SK-N-SH (cell line): ENCODE measurements at regions of chr2 and their contacts with region 1.

Region 1: DNA sequence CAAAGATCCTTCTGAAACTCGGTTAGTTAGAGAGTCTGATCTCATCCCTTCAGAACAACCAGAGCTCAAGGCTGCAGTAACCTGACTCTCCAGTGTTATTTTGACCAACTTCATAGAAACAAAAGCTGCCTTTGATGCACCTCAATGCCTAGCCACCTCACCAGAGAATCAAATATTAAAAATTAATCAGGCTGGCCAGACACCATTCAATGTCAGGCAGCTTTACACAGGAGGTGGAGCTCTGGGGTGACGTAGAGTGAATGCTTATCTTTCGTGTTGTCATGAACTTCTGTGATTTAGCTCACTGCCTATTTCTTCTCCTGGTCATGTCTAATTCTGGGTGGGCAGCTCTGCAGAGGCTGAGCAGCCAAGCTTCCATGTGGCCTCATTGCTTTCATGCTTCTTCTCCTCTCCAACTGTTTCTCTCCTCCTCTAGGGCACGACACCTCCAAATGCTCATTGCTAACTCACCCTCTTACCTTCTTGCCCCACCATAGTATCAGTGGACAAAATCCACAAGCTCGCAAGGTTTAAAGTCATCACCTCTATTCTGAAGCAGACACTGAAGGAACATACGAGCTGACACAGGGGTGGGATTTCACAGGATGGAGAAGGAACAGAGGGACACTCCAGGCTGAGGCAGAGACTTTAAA is 39.4 kb downstream of the AAK1 start:
- DNase-seq: no peak
- H3K4me3 ChIP-seq: no peak overlapping the region
- H3K27ac ChIP-seq: no peak overlapping the region
- H3K4me1 ChIP-seq: peaks cover 7 to 15% of the 10 kb centered on the region in 2 experiments
- H3K27me3 ChIP-seq: no peaks in the 10 kb centered on the region
- CTCF ChIP-seq: no peak
- EP300 ChIP-seq: no peak
- RAD21 ChIP-seq: no peak

Region 2: DNA sequence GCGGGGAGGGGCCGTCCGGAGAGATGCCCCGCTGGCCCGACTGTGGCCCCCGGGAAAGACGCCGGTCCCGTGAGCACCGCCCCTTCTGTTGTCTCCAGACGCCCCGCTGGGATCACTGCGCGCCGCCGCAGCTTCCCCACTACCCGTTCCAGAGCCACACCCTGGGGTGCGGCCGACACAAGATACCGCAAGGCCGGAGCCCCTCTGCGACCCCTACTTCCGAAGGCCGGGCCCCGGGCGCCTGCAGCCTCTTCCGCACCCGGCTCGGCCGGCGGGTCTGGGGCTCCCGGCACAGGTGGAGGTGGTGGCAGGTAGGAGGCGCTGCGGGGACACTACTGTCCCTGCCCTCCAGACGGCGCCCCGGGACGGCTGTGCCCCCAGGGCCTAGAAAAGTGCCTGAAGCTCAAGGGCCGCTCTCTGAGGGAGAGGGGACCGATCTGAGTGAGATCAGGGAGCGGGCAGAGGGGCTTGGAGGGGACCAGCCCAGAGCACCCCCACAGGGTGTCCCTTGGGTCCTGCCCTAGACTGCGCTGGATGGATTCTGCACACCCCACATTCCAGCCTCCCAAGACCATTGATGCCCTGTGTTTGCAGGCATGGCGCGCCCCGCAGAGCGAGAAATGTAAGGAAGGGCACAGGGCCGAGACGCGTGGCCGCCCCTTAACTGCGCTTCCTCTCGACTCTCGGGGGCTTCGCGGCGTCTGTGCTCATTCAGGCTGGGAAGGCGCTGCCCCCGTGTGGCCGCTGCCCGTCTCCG is 297.2 kb before region 1 on chr2:
- CTCF ChIA-PET with region 1: no interaction called
- POLR2A ChIA-PET with region 1: no interaction called
- DNase-seq: peak; percentile 93
- H3K4me3 ChIP-seq: peak overlapping the region; percentile 59 to 60
- H3K27ac ChIP-seq: peak overlapping the region; percentile 38 to 60; a peak in 2 of 4 replicates
- H3K4me1 ChIP-seq: peaks cover 0 to 16% of the 10 kb centered on the region in 2 experiments; a peak in 1 of 4 replicates
- H3K27me3 ChIP-seq: no peaks in the 10 kb centered on the region
- CTCF ChIP-seq: peak; percentile 79
- EP300 ChIP-seq: no peak
- RAD21 ChIP-seq: peak; percentile 96

Region 3: DNA sequence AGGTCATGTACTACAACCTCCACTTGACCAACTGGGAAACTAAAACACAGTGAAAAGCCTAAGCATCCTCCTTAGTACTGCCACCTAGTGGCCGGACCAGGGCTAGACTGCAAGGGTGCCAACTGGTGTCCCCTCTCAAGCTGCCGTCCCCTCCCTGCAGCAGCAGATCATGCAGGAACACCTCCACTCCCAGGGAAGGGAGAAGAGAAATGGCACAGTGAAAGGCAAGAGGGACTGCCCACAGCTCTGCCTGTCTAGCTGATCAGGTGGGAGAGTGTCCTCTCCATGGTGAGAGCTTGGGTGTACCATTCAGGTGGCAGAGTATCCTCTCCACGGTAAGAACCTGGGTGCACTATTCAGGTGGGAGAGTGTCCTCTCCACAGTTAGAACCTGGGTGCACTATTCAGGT is 38.7 kb before region 1 on chr2:
- CTCF ChIA-PET with region 1: interaction called, 14 read pairs
- POLR2A ChIA-PET with region 1: no interaction called
- DNase-seq: peak; percentile 65
- H3K4me3 ChIP-seq: no peak overlapping the region
- H3K27ac ChIP-seq: no peak overlapping the region
- H3K4me1 ChIP-seq: peaks cover 2 to 32% of the 10 kb centered on the region in 2 experiments
- H3K27me3 ChIP-seq: no peaks in the 10 kb centered on the region
- CTCF ChIP-seq: peak; percentile 80
- EP300 ChIP-seq: no peak
- RAD21 ChIP-seq: peak; percentile 46

Region 4: DNA sequence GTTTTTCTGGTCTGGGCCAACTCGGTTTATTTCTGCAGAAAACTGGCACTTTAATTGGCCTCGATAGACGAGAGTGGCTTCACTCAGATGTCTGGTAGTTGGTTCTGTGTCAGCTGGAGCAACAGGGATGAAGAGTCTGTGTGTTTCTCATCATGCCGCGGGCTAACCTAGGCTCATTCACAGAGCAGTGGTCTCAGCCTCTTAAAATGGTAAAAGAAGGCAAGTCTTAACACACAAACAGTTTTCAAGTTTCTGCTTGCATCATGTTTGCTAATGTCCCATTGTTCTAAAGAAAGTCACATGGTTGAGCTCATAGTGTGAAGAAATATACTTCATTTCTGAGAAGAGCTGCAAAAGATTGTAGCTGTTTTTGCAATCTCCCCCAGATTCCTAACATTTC is 100.3 kb after region 1 on chr2:
- CTCF ChIA-PET with region 1: no interaction called
- POLR2A ChIA-PET with region 1: no interaction called
- DNase-seq: no peak
- H3K4me3 ChIP-seq: no peak overlapping the region
- H3K27ac ChIP-seq: no peak overlapping the region
- H3K4me1 ChIP-seq: no peaks in the 10 kb centered on the region
- H3K27me3 ChIP-seq: no peaks in the 10 kb centered on the region
- CTCF ChIP-seq: no peak
- EP300 ChIP-seq: no peak
- RAD21 ChIP-seq: no peak